ENCODE measurements at regions of chr3 and their contacts with region 1.

Region 1: DNA sequence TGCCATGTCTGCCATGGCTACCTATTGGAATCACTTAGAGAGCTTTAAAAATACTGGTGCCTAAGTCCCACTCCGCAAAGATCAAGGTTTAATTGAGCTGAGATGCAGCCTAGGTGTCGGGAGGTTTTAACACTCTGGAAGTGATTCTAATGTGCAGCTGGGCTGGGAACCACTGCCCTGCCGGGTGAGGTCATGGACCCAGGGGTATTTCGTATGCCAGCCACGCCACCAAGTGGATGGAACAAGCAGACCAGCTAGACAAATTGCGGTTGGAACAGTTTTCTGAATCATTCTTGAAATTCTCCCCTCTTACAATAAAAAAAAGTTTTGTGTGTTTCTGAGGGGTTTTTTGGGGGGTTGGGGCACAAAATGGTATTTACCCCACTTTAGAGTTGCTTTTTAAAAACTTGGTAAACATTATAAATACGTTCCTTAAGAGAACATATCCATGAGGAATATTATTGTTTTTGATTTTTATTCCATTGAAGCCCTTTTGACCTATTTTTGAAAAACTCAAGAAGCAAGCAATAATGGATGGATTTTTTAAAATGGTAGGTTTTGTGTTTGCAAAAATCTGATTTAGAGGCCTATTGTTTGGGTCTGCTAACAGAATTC is 66.2 kb upstream of the CSTA start:
- DNase-seq: peak; percentile 82
- H3K4me3 ChIP-seq: no peak overlapping the region
- H3K27ac ChIP-seq: no peak overlapping the region
- H3K4me1 ChIP-seq: peaks cover 5% of the 10 kb centered on the region
- CTCF ChIP-seq: peak; percentile 95

Region 2: GRCh38 chr3:121855555-121855954 is 403.3 kb before region 1 on chr3:
- CTCF ChIA-PET with region 1: no interaction called
- POLR2A ChIA-PET with region 1: no interaction called
- intact Hi-C with region 1: loop called (anchors 5 kb)
- DNase-seq: peak; percentile 56
- H3K4me3 ChIP-seq: no peak overlapping the region
- H3K27ac ChIP-seq: no peak overlapping the region
- H3K4me1 ChIP-seq: no peaks in the 10 kb centered on the region
- CTCF ChIP-seq: peak; percentile 88

Region 3: DNA sequence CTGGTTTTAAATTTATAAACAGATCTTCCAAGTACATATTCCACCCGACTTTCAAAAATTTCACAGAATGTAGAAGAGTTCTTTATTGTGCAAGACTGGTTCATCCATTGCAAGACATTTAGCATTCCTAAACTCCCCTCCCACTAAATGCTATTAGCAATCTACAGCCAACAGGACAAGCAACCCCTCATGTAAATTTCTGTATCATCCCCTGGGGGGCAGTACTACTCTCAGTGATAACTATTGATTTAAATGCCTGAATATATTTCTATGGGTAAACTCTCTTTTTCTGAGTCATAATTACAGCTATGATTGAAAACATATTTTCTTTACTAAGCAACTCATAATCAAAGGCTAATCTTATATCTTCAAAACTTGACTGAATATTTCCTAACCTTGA is 375.4 kb before region 1 on chr3:
- CTCF ChIA-PET with region 1: no interaction called
- POLR2A ChIA-PET with region 1: no interaction called
- intact Hi-C with region 1: loop called (anchors 10 kb)
- DNase-seq: peak; percentile 42
- H3K4me3 ChIP-seq: no peak overlapping the region
- H3K27ac ChIP-seq: no peak overlapping the region
- H3K4me1 ChIP-seq: no peaks in the 10 kb centered on the region
- CTCF ChIP-seq: peak; percentile 87

Region 4: GRCh38 chr3:121979734-121980449 is 279.0 kb before region 1 on chr3:
- CTCF ChIA-PET with region 1: no interaction called
- POLR2A ChIA-PET with region 1: no interaction called
- intact Hi-C with region 1: loop called (anchors 5 kb)
- DNase-seq: no peak
- H3K4me3 ChIP-seq: no peak overlapping the region
- H3K27ac ChIP-seq: peak overlapping the region; percentile 14
- H3K4me1 ChIP-seq: peaks cover 29% of the 10 kb centered on the region
- CTCF ChIP-seq: no peak

Region 5: DNA sequence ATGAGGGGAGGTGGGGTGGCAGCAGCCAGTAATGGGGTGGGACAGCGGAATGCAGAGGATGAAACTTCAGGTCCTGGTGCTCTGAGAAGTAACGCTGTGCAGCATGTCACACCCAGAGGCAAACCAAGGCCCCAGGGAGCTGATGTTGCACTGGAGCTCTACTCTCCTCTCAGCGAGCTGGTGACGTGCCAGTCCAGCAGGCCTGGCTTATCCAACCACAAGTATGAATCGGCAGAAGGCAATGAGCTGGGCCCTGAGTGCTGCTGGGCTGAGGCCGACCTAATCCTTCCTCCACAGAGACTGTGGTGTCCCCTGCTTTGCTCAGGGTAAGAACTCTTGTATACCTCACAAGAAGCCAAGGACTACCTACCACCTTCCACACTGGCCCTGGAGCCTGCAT is 173.2 kb before region 1 on chr3:
- CTCF ChIA-PET with region 1: no interaction called
- POLR2A ChIA-PET with region 1: no interaction called
- intact Hi-C with region 1: no loop called
- DNase-seq: no peak
- H3K4me3 ChIP-seq: no peak overlapping the region
- H3K27ac ChIP-seq: no peak overlapping the region
- H3K4me1 ChIP-seq: peaks cover 56% of the 10 kb centered on the region
- CTCF ChIP-seq: no peak

Region 6: GRCh38 chr3:122101646-122102045 is 157.2 kb before region 1 on chr3:
- CTCF ChIA-PET with region 1: no interaction called
- POLR2A ChIA-PET with region 1: interaction called, 3 read pairs
- intact Hi-C with region 1: loop called (anchors 1 kb)
- DNase-seq: peak; percentile 77
- H3K4me3 ChIP-seq: no peak overlapping the region
- H3K27ac ChIP-seq: no peak overlapping the region
- H3K4me1 ChIP-seq: peaks cover 57% of the 10 kb centered on the region
- CTCF ChIP-seq: peak; percentile 80

Region 7: GRCh38 chr3:122200661-122201060 is 58.2 kb before region 1 on chr3:
- CTCF ChIA-PET with region 1: no interaction called
- POLR2A ChIA-PET with region 1: no interaction called
- intact Hi-C with region 1: no loop called
- DNase-seq: no peak
- H3K4me3 ChIP-seq: no peak overlapping the region
- H3K27ac ChIP-seq: no peak overlapping the region
- H3K4me1 ChIP-seq: no peaks in the 10 kb centered on the region
- CTCF ChIP-seq: no peak

Region 8: DNA sequence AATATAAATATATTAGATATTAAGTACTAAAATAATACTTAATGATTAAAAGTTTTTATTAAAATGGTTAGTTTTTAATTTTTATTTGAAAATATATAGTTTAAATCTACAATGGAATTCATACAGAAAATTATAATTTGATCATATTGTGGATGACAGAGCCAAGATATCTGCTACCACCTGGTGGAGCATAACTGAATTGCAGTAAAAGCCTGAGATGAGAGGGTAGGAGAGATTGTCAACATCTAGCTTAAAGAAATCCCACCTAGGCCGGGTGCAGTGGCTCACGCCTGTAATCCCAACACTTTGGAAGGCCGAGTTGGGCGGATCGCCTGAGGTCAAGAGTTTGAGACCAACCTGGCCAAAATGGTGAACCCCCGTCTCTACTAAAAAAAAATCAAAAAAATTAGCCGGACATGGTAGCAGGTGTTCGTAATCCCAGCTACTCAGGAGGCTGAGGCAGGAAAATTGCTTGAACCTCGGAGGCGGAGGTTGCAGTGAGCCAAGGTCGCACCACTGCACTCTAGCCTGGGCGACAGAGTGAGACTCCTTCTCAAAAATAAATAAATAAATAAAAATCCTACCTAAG is 41.1 kb after region 1 on chr3:
- CTCF ChIA-PET with region 1: no interaction called
- POLR2A ChIA-PET with region 1: no interaction called
- intact Hi-C with region 1: loop called (anchors 2 kb)
- DNase-seq: peak; percentile 51
- H3K4me3 ChIP-seq: no peak overlapping the region
- H3K27ac ChIP-seq: no peak overlapping the region
- H3K4me1 ChIP-seq: peaks cover 9% of the 10 kb centered on the region
- CTCF ChIP-seq: peak; percentile 82

Region 9: GRCh38 chr3:122322095-122323075 is 63.5 kb after region 1 on chr3:
- CTCF ChIA-PET with region 1: no interaction called
- POLR2A ChIA-PET with region 1: no interaction called
- intact Hi-C with region 1: no loop called
- DNase-seq: no peak
- H3K4me3 ChIP-seq: no peak overlapping the region
- H3K27ac ChIP-seq: no peak overlapping the region
- H3K4me1 ChIP-seq: peaks cover 7% of the 10 kb centered on the region
- CTCF ChIP-seq: no peak

Region 10: DNA sequence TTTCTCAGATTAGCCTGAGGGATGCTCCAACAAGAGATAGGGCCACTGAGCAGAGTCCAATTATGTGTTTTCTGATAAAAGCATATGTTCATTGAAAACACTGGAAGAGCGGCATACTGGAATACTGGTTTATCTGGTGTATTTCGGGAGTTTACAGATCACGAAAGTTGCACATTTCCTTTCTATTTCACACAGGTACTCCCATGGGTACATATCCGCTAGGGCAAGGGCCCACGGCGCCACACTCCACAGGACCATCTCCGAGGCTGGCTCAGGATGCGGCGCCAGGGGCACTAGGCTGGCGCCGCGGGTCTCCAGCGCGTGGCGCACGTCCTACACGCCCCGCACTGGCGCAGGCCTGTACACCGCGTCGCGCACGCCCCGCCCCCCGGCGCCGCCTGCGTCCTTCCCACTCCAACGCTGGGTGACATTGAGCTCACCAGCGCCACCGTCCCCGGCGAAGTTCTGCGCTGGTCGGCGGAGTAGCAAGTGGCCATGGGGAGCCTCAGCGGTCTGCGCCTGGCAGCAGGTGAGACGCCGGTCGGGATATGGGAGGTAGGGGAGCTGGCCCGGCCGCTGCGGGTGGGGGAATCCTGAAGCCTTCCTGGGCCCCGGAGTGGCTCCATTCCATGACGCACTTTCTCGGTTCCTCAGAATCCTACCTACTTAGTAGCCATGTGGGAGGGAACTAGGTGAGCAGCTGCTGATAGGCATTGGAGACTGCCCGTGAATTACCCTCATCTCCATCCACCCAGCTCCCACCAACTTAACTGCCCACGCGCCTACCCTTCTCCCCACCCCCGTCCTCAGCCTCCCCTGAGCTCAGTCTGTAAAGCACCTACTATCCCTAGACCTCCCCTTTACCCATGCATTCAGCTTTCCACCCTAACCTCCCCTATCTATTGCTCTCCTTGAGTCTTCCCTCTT is 125.2 kb after region 1 on chr3 and contains the start of gene FAM162A:
- CTCF ChIA-PET with region 1: no interaction called
- POLR2A ChIA-PET with region 1: no interaction called
- intact Hi-C with region 1: no loop called
- DNase-seq: peak; percentile 96
- H3K4me3 ChIP-seq: peak within 1 kb of the TSS; percentile 83
- H3K27ac ChIP-seq: peak within 1 kb of the TSS; percentile 74
- H3K4me1 ChIP-seq: peaks cover 47% of the 10 kb centered on the region
- CTCF ChIP-seq: peak; percentile 80
- total RNA-seq, gene FAM162A: 27.9 and 43.2 TPM in 2 replicates

Measured in OCI-LY7 (cell line).